ENCODE measurements at regions of chr6 and their contacts with region 1.

Region 1: GRCh38 chr6:26223650-26224546 is 136.7 kb downstream of the HFE start:
- DNase-seq: peak; percentile 59
- ATAC-seq: peak; percentile 77
- H3K4me3 Mint-ChIP-seq: no peak overlapping the region
- H3K27ac Mint-ChIP-seq: no peak overlapping the region
- H3K4me1 Mint-ChIP-seq: peaks cover 29% of the 10 kb centered on the region
- H3K27me3 Mint-ChIP-seq: no peaks in the 10 kb centered on the region

Region 2: DNA sequence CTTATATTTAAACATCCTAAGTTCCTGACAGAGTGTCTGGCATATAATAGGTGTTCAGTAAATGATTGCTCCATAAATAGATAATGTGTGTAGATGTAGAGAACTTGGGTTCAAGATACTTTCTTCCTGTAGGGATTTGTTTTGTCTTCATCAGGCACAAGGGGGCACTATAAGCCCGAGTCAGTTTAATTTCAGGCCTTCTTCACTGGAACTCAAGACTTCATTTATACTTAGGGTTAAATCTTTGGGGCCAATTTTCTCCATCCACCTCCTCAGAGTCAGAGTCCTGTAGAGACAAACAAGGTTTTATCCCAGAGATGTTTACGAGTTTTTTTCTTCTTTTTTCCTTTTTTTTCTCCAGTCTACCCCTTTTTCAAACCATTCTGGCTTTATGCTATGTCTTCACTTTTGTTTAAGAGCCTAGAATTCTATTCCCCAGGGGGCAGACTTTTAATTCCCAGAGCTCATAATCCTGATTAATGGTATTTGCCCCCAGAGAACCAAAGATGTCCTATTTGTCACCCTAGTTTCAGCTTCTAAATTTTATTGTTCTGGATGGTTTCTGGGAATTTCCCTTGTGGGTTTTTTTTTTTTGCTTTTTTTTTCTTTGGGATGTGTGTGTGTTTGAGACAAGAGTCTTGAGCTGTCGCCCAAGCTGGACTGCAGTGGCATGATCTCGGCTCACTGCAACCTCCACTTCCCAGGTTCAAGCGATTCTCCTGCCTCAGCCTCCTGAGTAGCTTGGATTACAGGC is 48.3 kb before region 1 on chr6:
- POLR2A ChIA-PET with region 1: interaction called, 17 read pairs
- DNase-seq: no peak
- ATAC-seq: no peak
- H3K4me3 Mint-ChIP-seq: peak overlapping the region; percentile 54
- H3K27ac Mint-ChIP-seq: peak overlapping the region; percentile 76
- H3K4me1 Mint-ChIP-seq: peaks cover 41% of the 10 kb centered on the region
- H3K27me3 Mint-ChIP-seq: no peaks in the 10 kb centered on the region

Region 3: GRCh38 chr6:26204332-26205165 is 19.3 kb before region 1 on chr6:
- POLR2A ChIA-PET with region 1: interaction called, 1,314 read pairs
- DNase-seq: peak; percentile 84
- ATAC-seq: peak; percentile 64
- H3K4me3 Mint-ChIP-seq: no peak overlapping the region
- H3K27ac Mint-ChIP-seq: no peak overlapping the region
- H3K4me1 Mint-ChIP-seq: peaks cover 34% of the 10 kb centered on the region
- H3K27me3 Mint-ChIP-seq: no peaks in the 10 kb centered on the region

Region 4: GRCh38 chr6:26240154-26241032 is 16.5 kb after region 1 on chr6:
- POLR2A ChIA-PET with region 1: interaction called, 425 read pairs
- DNase-seq: peak; percentile 81
- ATAC-seq: peak; percentile 82
- H3K4me3 Mint-ChIP-seq: peak overlapping the region; percentile 85
- H3K27ac Mint-ChIP-seq: peak overlapping the region; percentile 98
- H3K4me1 Mint-ChIP-seq: peaks cover 36% of the 10 kb centered on the region
- H3K27me3 Mint-ChIP-seq: no peaks in the 10 kb centered on the region